ENCODE measurements at regions of chr7 and their contacts with region 1.

Region 1: GRCh38 chr7:25894902-25895791 is 256.9 kb upstream of the NFE2L3 start:
- DNase-seq: peak; percentile 21 to 61
- ATAC-seq: peak; percentile 67 to 73
- H3K4me3 ChIP-seq: peak overlapping the region; percentile 38 to 62 (median 47)
- H3K27ac ChIP-seq: peak overlapping the region; percentile 26 to 61 (median 54)
- H3K4me1 ChIP-seq: peaks cover 7 to 9% of the 10 kb centered on the region in 2 donors
- H3K27me3 ChIP-seq: no peaks in the 10 kb centered on the region
- CTCF ChIP-seq: peak; percentile 50 to 84 (median 72)
- POLR2A ChIP-seq: no peak

Region 2: GRCh38 chr7:25789701-25790640 is 105.2 kb before region 1 on chr7:
- in situ Hi-C with region 1: no loop called
- intact Hi-C with region 1: no loop called
- DNase-seq: no peak
- ATAC-seq: no peak
- H3K4me3 ChIP-seq: no peak overlapping the region
- H3K27ac ChIP-seq: no peak overlapping the region
- H3K4me1 ChIP-seq: peaks cover 0 to 8% of the 10 kb centered on the region in 2 donors
- H3K27me3 ChIP-seq: no peaks in the 10 kb centered on the region
- CTCF ChIP-seq: no peak
- POLR2A ChIP-seq: no peak

Region 3: GRCh38 chr7:25839084-25839769 is 55.9 kb before region 1 on chr7:
- in situ Hi-C with region 1: no loop called
- intact Hi-C with region 1: no loop called
- DNase-seq: no peak
- ATAC-seq: no peak
- H3K4me3 ChIP-seq: no peak overlapping the region
- H3K27ac ChIP-seq: peak overlapping the region; percentile 87 to 91 (median 88)
- H3K4me1 ChIP-seq: peaks cover 33 to 54% of the 10 kb centered on the region in 2 donors
- H3K27me3 ChIP-seq: no peaks in the 10 kb centered on the region
- CTCF ChIP-seq: peak in 4 of 5 experiments; percentile 38 to 53 (median 44)
- POLR2A ChIP-seq: no peak

Region 4: DNA sequence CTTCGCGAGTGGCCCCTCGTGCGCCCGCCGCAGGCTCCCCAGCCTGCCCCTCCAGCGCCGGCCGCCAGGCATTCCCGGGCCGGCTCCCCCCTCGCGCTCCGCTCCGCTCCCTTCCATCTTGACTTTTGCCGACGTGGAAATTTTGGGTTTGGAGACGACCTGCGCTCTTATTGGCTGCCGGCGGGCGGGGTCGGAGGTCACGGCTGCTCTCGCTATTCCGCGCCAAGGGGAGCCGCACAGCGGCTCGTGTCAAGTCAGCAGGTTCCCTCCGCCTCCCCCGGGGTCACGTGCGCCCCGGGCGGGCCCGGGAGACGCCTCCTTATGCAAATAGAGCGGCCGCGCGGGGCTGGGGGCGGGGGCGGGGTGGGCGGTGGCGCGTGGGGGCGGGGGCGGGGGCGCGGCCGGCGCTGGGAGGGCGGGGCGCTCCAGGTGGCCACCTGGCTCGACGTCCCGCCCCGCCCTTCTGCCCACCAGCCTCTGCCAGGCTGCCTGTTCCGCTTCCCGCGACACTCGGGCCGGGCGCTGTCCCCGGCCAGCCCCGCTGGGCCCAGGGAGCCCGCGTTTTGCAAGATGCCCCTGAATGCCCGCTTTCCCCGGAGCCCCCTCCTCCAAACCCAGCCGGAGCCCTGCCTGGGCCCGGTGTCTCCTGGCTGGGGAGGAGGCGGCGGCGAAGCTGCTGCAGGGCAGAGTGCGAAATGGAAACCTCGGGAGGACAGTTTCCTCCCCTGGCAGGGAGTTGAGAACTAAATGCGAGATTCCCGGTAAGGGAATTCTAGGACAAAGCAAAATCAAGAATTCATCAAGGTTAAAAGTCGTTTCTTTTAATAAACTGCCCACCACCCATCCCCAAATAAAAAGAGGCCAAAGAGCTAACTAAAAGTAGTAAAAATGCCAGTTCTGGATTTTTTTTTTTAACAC is 56.1 kb after region 1 on chr7:
- in situ Hi-C with region 1: no loop called
- intact Hi-C with region 1: loop called (anchors 5 kb)
- DNase-seq: peak; percentile 82 to 86
- ATAC-seq: peak; percentile 86 to 90
- H3K4me3 ChIP-seq: peak overlapping the region; percentile 59 to 88 (median 64)
- H3K27ac ChIP-seq: peak overlapping the region; percentile 68 to 76 (median 72)
- H3K4me1 ChIP-seq: peaks cover 5 to 15% of the 10 kb centered on the region in 2 donors
- H3K27me3 ChIP-seq: no peaks in the 10 kb centered on the region
- CTCF ChIP-seq: no peak
- POLR2A ChIP-seq: peak; percentile 59 to 65

Region 5: GRCh38 chr7:25968205-25968993 is 73.3 kb after region 1 on chr7:
- in situ Hi-C with region 1: no loop called
- intact Hi-C with region 1: no loop called
- DNase-seq: no peak
- ATAC-seq: no peak
- H3K4me3 ChIP-seq: no peak overlapping the region
- H3K27ac ChIP-seq: no peak overlapping the region
- H3K4me1 ChIP-seq: no peaks in the 10 kb centered on the region
- H3K27me3 ChIP-seq: no peaks in the 10 kb centered on the region
- CTCF ChIP-seq: no peak
- POLR2A ChIP-seq: no peak

Region 6: GRCh38 chr7:26052721-26053120 is 157.6 kb after region 1 on chr7:
- in situ Hi-C with region 1: loop called in 1 of 4 experiments (anchors 10 kb)
- intact Hi-C with region 1: no loop called
- DNase-seq: no peak
- ATAC-seq: no peak
- H3K4me3 ChIP-seq: no peak overlapping the region
- H3K27ac ChIP-seq: no peak overlapping the region
- H3K4me1 ChIP-seq: no peaks in the 10 kb centered on the region
- H3K27me3 ChIP-seq: peaks cover 0 to 9% (median 0%) of the 10 kb centered on the region in 3 donors
- CTCF ChIP-seq: no peak
- POLR2A ChIP-seq: no peak

Region 7: DNA sequence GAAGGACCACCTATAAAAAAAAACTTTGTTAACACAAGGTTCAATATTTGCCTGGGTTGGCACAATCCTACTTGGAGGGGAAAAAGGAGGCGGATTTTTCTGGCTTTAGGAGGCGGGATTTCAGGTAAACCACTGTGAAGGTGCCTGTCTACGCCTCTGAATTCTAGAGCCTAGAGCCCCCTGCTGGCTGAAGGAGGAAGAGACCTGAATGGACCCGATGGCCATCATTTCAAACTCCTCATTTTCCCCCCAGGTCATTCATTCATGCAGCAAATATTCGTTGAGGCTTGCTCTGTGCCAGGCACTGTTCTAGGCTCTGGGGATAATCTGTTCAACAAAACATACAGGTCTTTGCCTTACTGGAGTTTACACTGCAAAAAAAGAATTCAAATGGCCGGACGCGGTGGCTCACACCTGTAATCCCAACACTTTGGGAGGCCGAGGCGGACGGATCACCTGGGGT is 166.6 kb after region 1 on chr7:
- in situ Hi-C with region 1: loop called in 3 of 4 experiments (anchors 5 to 10 kb)
- intact Hi-C with region 1: loop called (anchors 1 kb)
- DNase-seq: peak; percentile 30 to 48
- ATAC-seq: peak; percentile 58 to 71
- H3K4me3 ChIP-seq: no peak overlapping the region
- H3K27ac ChIP-seq: no peak overlapping the region
- H3K4me1 ChIP-seq: no peaks in the 10 kb centered on the region
- H3K27me3 ChIP-seq: no peaks in the 10 kb centered on the region
- CTCF ChIP-seq: peak; percentile 67 to 83 (median 75)
- POLR2A ChIP-seq: no peak

Region 8: DNA sequence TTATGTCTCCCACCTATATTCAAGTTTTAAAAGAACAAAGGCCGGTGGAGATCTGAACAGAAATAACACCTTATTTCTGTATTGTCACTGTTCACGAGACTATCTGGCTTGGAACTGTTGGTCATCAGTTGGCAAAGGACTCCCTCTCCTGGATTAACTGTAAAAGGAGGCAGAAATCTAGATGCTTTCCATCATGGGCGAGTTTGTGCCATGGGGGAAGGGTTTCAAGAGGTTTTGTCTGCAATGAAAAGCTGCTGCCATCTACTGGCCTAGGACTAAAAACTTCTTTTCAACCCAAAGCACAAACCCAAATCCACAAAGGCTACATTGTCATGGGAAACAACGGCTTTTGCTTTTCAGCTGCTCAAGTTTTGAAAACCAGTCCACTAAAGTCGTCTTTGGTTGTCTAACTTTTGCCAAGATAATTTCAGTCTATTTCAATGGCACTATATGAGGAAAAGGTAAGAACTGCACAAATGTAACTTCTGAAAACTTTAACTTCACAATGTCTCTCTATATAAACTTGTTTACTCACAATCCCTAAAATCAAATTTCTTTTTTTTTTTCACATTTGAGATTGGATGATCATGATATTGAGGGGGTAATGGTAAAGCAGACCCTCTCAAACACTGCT is 772.5 kb after region 1 on chr7:
- in situ Hi-C with region 1: loop called in 3 of 4 experiments (anchors 10 kb)
- intact Hi-C with region 1: loop called (anchors 5 kb)
- DNase-seq: peak; percentile 27 to 29
- ATAC-seq: peak; percentile 81 to 82
- H3K4me3 ChIP-seq: no peak overlapping the region
- H3K27ac ChIP-seq: no peak overlapping the region
- H3K4me1 ChIP-seq: peaks cover 0 to 5% of the 10 kb centered on the region in 2 donors
- H3K27me3 ChIP-seq: peaks cover 0 to 3% (median 0%) of the 10 kb centered on the region in 3 donors
- CTCF ChIP-seq: peak; percentile 44 to 74 (median 64)
- POLR2A ChIP-seq: no peak